ENCODE measurements at regions of chr6 and their contacts with region 1.

Region 1: DNA sequence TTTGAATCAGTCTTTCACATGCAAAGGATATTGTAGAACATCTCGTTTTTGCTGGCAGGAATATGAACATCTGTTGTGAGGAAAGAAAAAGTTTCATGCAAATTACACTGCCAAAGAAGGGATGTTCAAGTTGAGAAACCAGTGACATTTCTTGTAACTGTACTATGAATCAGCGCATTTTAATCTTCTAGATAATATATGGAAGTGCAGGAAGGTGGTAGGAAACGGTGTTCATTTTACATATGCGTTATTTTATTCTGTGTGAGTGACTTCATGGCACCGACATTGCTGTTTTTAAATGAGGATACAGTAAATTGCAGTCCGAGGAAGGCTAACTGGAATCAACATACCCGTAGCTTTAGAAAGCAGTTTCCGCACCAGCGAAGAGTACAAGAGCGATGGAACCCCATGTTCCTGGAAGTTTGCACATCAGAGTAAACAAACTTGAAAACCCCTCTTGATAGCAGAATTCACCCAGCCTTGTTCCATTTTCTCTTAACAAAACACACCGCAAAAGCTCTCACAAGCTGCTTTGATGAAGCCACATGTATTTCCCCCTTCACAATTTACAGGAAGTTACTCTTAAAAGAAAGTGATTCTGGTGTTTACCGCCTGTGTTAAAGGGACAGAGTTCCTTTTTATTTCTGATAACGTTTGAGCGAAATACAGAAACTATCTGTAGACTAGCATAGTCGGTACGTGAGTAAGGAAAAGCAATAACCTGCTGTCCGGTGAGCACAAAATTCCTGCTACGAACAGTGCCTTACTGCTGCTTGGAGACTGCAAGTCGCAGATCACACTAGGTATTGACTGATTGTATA is 11.5 kb downstream of the PRDM1 start:
- DNase-seq: no peak

Region 2: GRCh38 chr6:105851113-105851580 is 246.5 kb before region 1 on chr6:
- intact Hi-C with region 1: no loop called
- DNase-seq: no peak

Region 3: GRCh38 chr6:106325336-106326178 is 227.9 kb after region 1 on chr6 and contains the start of gene ATG5:
- intact Hi-C with region 1: loop called (anchors 10 kb)
- DNase-seq: peak; percentile 100
- total RNA-seq, gene ATG5: 14.6 TPM